ENCODE measurements at regions of chr12 and their contacts with region 1.

Region 1: DNA sequence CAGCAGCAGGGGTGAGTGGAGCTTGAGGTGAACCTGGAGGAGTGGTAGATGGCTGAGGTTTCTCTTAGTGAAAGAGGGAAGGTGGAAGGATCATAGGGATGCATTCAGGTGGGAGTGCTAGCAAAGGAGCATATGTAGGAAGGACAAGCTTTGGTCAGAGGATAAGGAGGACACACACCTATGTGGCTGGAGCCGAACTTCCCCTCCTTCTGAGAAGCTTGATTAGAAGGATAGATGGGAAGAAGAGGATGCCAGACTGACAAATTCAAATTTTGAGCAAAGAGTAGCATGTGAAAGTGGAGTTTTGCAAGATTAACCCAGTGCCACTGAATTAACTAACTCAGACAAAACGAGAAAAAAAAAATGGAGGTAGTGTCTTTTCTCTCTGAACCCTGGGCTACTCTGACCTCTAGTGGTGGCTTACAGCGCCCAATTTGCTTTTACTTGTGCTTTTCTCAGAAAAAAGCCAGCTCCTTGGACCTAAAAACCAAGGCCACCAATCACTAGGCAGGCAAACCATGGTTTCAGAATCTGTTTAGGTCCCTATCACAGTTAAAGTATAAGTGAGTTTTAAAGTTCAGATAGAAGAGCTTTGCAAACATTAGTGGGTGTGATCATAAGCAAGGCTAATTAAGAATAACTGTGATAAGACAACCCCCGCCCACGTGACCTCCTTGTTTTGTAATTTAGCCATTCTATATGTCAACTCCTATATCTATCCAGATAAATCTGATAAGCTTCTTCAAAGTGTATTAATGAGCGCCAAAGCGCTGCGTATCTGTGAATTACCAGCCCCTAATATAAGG is 15.5 kb downstream of the EMP1 start:
- DNase-seq: peak; percentile 31
- ATAC-seq: peak; percentile 77
- H3K4me3 Mint-ChIP-seq: no peak overlapping the region
- H3K27ac Mint-ChIP-seq: no peak overlapping the region
- H3K4me1 Mint-ChIP-seq: peaks cover 4% of the 10 kb centered on the region
- H3K27me3 Mint-ChIP-seq: peaks cover 18% of the 10 kb centered on the region
- CTCF ChIP-seq: no peak

Region 2: DNA sequence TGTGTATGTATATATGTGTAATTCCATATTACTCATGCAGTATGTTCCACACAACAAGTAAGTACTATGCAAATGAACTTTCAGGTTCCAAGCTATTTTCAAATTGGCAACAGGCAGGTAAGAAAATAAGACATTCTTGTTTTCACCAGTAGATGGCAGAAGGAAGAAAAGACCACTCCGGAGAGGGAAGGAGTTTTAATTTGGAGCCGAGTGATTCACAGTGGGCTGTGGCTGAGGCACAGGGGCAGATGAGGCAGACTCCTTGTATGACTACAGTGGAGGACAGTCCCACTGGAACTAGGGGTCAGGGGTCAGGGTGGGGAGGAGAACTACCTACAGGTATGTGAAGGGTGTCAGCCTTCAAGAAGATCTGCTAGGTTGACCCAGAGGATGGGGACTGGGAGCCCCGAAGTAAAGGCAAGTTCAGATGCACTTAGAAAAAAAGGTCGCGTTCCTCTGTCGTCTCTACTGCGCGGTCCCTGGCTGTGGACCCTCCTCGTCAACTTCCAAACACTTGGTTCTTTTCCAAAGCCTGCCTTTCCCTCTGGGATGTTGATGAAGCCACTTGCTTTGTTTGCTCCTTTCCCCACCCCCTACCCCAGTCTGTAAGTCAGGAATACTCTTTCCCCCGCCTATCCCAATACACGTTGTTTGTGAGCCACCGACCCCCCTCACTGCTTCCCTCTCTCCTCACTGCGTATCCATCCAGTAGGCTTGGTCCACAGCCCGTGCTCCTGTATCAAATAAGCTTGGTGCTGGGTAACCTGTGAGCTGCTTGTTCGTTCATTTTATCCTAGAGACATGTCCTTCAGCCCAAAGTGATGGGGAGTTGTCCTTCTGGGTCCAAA is 374.8 kb before region 1 on chr12:
- CTCF ChIA-PET with region 1: interaction called, 16 read pairs
- POLR2A ChIA-PET with region 1: no interaction called
- intact Hi-C with region 1: loop called (anchors 1 kb)
- DNase-seq: no peak
- ATAC-seq: peak; percentile 65
- H3K4me3 Mint-ChIP-seq: no peak overlapping the region
- H3K27ac Mint-ChIP-seq: no peak overlapping the region
- H3K4me1 Mint-ChIP-seq: peaks cover 4% of the 10 kb centered on the region
- H3K27me3 Mint-ChIP-seq: no peaks in the 10 kb centered on the region
- CTCF ChIP-seq: no peak

Region 3: GRCh38 chr12:13023811-13024530 is 188.1 kb before region 1 on chr12:
- CTCF ChIA-PET with region 1: interaction called, 44 read pairs
- POLR2A ChIA-PET with region 1: no interaction called
- intact Hi-C with region 1: loop called (anchors 1 kb)
- DNase-seq: no peak
- ATAC-seq: no peak
- H3K4me3 Mint-ChIP-seq: no peak overlapping the region
- H3K27ac Mint-ChIP-seq: no peak overlapping the region
- H3K4me1 Mint-ChIP-seq: no peaks in the 10 kb centered on the region
- H3K27me3 Mint-ChIP-seq: peaks cover 26% of the 10 kb centered on the region
- CTCF ChIP-seq: no peak

Region 4: DNA sequence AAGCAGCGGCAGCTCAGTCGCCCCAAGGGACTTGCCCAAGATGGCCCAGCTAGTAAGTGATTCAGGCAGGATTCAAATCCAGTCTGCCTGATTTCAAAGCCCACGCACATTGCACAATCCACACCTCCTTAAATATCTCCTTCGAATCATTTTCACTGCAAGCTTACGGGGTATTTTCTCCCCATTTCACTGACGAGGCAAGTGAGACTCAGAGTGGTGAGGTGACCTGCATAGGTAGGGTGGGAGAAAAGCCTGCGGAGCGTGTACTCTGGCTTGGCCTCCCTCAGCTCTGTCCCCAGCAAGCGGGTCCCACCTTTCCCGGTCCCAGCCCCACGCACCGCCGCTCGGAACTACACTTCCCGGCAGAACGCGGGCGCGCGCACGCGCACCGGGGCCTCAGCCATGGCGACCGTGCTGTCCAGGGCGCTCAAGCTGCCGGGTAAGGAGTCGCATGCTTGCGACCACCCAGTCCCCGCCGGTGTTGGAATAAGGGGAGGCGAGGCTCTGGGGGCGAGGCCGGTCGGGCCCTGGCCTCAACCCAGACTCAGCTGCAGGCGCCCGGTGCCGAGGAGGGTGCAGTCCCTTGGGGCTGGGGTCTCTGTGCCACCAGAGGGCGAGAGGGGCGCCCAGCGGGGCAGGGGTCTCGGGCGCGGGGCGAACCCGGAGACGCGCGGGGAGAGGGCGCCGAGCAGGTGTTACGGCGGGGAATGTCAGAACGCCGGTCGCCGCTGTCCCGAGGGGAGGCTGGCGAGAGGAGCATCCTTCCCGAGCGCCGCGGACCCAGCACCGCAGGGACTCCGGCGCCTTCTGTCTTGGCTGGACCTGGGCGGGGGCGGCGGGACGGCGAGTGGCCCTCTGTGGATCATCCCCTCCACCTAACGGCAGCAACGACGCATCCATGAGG is 167.8 kb before region 1 on chr12 and contains the start of gene FAM234B:
- CTCF ChIA-PET with region 1: interaction called, 5 read pairs
- POLR2A ChIA-PET with region 1: no interaction called
- intact Hi-C with region 1: loop called (anchors 1 kb)
- DNase-seq: peak; percentile 73
- ATAC-seq: peak; percentile 96
- H3K4me3 Mint-ChIP-seq: peak within 1 kb of the TSS; percentile 89
- H3K27ac Mint-ChIP-seq: peak within 1 kb of the TSS; percentile 80
- H3K4me1 Mint-ChIP-seq: peaks cover 18% of the 10 kb centered on the region
- H3K27me3 Mint-ChIP-seq: no peaks in the 10 kb centered on the region
- CTCF ChIP-seq: no peak
- total RNA-seq, gene FAM234B: 4.7 and 6.3 TPM in 2 replicates

Region 5: GRCh38 chr12:13196130-13196921 is 15.7 kb before region 1 on chr12 and contains the start of gene EMP1:
- CTCF ChIA-PET with region 1: interaction called, 12 read pairs
- POLR2A ChIA-PET with region 1: no interaction called
- intact Hi-C with region 1: no loop called
- DNase-seq: peak; percentile 32
- ATAC-seq: peak; percentile 92
- H3K4me3 Mint-ChIP-seq: peak within 1 kb of the TSS; percentile 75
- H3K27ac Mint-ChIP-seq: peak within 1 kb of the TSS; percentile 50
- H3K4me1 Mint-ChIP-seq: peaks cover 31% of the 10 kb centered on the region
- H3K27me3 Mint-ChIP-seq: peaks cover 38% of the 10 kb centered on the region
- CTCF ChIP-seq: no peak
- total RNA-seq, gene EMP1: 0.39 TPM in 1 of 2 replicates, not detected in the other

Region 6: GRCh38 chr12:13223179-13223859 is 11.3 kb after region 1 on chr12:
- CTCF ChIA-PET with region 1: interaction called, 14 read pairs
- POLR2A ChIA-PET with region 1: no interaction called
- intact Hi-C with region 1: no loop called
- DNase-seq: no peak
- ATAC-seq: no peak
- H3K4me3 Mint-ChIP-seq: no peak overlapping the region
- H3K27ac Mint-ChIP-seq: no peak overlapping the region
- H3K4me1 Mint-ChIP-seq: no peaks in the 10 kb centered on the region
- H3K27me3 Mint-ChIP-seq: peaks cover 21% of the 10 kb centered on the region
- CTCF ChIP-seq: no peak

Measured in activated B cell treated with CpG ODN at 0.5 μM for 24 hours (primary cell).